AG04450 (cell line): ENCODE measurements at regions of chr7 and their contacts with region 1.

Region 1: GRCh38 chr7:99109108-99110051 is 34.5 kb downstream of the SMURF1 start:
- DNase-seq: no peak
- H3K4me3 ChIP-seq: no peak overlapping the region
- H3K27ac ChIP-seq: peak overlapping the region; percentile 76
- H3K27me3 ChIP-seq: no peaks in the 10 kb centered on the region
- CTCF ChIP-seq: no peak

Region 2: DNA sequence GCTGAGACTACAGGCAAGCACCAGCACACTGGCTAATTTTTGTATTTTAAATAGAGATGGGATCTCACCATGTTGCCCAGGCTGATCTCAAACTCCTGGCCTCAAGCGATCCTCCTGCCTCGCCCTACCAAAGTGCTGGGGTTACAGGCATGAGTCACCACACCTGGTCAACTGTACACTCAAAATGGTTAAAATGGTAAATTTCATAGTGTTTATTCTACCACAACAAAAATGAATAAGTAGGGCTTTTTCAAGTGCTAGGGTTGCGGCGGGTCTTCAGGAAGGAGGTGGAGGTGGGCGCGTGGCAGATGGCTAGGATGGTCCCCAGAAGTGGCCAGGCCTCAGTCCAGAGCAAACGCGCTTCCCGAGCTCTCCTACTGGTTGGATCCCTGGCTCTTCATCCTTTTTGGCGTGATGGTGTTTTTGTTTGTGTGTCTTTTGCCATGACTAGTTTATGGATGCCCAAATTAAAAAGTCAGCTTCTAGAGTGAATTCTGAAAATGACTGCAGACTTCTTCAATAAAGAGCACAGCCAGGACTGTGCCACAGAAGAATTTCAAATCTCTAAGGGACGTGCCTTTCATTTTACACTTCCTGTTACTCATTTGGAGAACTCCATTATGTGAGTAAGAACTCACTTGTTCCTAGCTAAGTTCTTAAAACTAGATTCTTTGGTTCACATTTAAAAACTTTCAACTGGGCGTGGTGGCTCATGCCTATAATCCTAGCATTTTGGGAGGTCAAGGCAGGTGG is 313.5 kb before region 1 on chr7:
- CTCF ChIA-PET with region 1: no interaction called
- POLR2A ChIA-PET with region 1: no interaction called
- DNase-seq: no peak
- H3K4me3 ChIP-seq: no peak overlapping the region
- H3K27ac ChIP-seq: no peak overlapping the region
- H3K27me3 ChIP-seq: no peaks in the 10 kb centered on the region
- CTCF ChIP-seq: no peak

Region 3: DNA sequence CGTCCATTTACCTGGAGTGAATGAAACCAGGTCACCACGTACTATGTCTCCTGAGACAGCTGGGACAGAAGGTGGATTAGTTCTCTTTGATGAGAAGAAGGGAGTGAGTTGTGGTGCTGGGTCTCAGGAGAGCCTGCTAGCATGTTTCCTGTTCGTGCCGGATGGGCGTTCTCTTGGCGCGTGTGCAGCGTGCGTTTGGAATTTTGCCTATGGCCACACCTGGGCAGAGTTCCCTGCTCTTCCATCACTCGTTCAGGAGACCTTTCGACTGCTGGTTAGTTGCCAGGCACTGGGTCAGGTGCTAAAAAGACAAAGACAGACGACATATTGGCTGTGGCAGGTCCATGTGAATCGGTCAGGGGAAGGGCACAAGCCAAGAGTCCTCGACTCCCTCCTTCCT is 140.8 kb before region 1 on chr7:
- CTCF ChIA-PET with region 1: no interaction called
- POLR2A ChIA-PET with region 1: no interaction called
- DNase-seq: no peak
- H3K4me3 ChIP-seq: no peak overlapping the region
- H3K27ac ChIP-seq: no peak overlapping the region
- H3K27me3 ChIP-seq: no peaks in the 10 kb centered on the region
- CTCF ChIP-seq: no peak

Region 4: GRCh38 chr7:99078416-99078815 is 31.0 kb before region 1 on chr7:
- CTCF ChIA-PET with region 1: no interaction called
- POLR2A ChIA-PET with region 1: interaction called, 14 read pairs
- DNase-seq: no peak
- H3K4me3 ChIP-seq: no peak overlapping the region
- H3K27ac ChIP-seq: no peak overlapping the region
- H3K27me3 ChIP-seq: no peaks in the 10 kb centered on the region
- CTCF ChIP-seq: no peak

Region 5: DNA sequence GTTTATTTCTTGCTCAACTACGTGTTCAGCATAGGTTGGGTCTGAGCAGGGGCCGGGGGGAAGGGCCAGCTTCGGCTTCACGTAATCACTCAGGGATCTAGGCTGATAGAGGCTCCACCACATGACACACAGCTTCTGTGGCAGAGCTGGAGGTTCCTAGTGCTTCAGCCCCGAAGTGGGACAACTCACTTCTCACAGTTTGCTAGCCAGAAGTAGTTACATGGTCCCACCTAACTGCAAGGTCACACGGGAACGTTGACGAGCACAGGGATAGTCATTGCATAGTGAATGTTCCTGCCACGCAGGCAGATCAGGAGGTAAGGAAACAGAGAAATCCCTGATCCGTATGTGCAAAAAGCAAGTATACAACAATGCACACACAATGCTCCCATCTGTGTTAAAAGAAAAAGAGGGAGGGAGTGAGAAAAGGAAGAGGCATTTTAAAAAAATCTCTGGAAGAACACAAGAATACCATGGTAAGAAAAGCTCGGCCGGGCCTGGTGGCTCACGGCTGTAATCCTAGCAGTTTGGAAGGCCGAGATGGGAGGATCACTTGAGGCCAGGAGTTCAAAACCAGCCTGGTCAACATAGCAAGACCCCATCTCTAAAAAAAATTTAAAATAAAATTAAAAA is 17.7 kb after region 1 on chr7:
- CTCF ChIA-PET with region 1: no interaction called
- POLR2A ChIA-PET with region 1: no interaction called
- DNase-seq: no peak
- H3K4me3 ChIP-seq: no peak overlapping the region
- H3K27ac ChIP-seq: no peak overlapping the region
- H3K27me3 ChIP-seq: no peaks in the 10 kb centered on the region
- CTCF ChIP-seq: no peak

Region 6: DNA sequence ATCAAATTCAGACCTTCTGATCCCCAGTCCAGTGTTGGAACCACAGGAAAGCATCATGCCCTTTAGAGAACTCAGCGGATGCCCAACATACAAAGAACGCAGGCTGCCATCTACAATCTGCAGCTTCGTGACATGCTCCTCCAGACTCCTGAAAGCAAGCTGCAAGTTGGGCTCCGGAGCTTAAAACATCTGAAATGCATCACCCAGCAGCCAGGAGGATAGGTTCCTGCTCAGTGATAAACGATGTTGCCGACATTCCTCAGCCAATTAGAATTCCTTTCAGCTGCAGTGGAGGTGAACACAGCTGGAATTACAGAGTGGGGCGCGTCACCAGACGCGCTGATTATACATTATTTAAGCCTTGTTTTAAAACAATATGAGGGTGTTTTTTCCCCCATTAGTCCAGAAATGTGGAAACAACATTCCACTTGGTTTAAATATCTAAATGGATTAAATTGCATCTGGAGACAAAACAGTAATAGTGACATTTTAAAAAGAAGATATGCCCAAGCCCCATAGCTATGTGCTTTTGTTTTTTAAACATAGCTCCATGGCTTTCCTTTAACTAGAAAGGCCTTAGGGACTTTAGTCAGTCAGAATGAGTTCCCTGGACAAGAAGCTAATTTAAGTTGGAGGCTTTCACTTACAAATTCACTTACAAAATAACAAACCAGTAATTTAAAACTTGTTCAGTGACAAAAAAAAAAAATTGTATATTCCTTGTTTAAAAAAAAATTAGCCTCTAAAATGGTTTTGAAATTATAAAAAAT is 28.2 kb after region 1 on chr7:
- CTCF ChIA-PET with region 1: interaction called, 8 read pairs
- POLR2A ChIA-PET with region 1: interaction called, 24 read pairs
- DNase-seq: peak; percentile 79
- H3K4me3 ChIP-seq: peak overlapping the region; percentile 53
- H3K27ac ChIP-seq: peak overlapping the region; percentile 58
- H3K27me3 ChIP-seq: no peaks in the 10 kb centered on the region
- CTCF ChIP-seq: peak; percentile 27; the same call in 1 of the 2 replicates